Naive thymus-derived CD4-positive, alpha-beta T cell (primary cell): ENCODE measurements at regions of chr4 and their contacts with region 1.

Region 1: GRCh38 chr4:185471235-185472102 is at the start of gene CCDC110:
- DNase-seq: peak; percentile 72 to 89 (median 86)
- ATAC-seq: peak; percentile 99
- H3K4me3 ChIP-seq: peak within 1 kb of the TSS; percentile 61
- H3K4me3 Mint-ChIP-seq: peak within 1 kb of the TSS; percentile 87 to 98 (median 92)
- H3K27ac ChIP-seq: peak within 1 kb of the TSS; percentile 65
- H3K27ac Mint-ChIP-seq: peak within 1 kb of the TSS; percentile 5 to 90 (median 86)
- H3K4me1 ChIP-seq: peaks cover 0 to 3% of the 10 kb centered on the region in 2 donors
- H3K4me1 Mint-ChIP-seq: peaks cover 5 to 18% (median 9%) of the 10 kb centered on the region in 7 donors
- H3K27me3 ChIP-seq: no peaks in the 10 kb centered on the region
- H3K27me3 Mint-ChIP-seq: peaks cover 0 to 52% (median 6%) of the 10 kb centered on the region in 5 donors
- total RNA-seq, gene CCDC110: 0.42 to 1.8 (median 0.76) TPM in 4 of 5 experiments, not detected in the other

Region 2: DNA sequence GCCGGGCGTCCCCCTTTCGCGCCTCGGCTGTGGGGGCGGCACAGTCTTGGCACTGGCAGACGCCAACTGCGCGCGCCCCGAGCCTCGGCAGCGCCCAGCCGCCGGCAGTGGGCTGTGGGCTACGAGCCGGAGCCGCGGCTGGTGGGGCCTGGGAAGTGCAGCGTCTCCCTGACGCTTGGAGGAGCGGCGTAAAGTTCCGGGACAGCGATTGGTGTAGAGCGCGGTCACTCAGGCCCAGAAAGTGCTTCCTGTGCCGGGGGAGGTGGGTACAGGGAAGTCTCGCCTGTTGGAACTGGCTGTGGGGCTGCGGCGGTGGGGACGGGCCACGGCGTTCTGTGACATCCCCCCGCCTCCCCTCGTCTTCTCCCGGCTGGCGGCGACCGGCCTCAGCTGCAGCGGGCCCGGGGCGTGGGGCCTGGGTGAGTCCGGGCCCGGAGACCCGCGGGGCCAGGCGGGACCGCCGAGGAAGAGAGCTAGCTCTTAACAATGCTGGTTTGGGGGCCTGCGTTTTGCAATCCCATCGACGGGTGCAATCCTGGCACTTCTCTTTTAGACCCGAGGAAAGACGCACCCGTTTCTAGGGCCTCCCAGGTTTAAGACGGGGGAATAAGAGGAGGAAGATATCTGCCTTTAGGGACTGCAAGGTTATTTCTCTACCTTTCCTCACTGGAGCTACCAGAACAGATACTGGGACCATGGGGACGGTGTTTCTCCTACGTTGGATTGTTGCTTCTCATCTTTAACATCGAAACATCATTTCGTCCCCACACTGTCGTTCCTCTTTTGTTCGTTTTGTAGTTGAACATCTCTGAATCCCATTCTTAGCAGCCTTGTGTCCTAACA is 1812.2 kb before region 1 on chr4 and contains the starts of genes RWDD4 and TRAPPC11:
- CTCF ChIA-PET with region 1: no interaction called
- POLR2A ChIA-PET with region 1: no interaction called
- intact Hi-C with region 1: loop called in 1 of 2 experiments (anchors 2 kb)
- DNase-seq: peak; percentile 83 to 97 (median 95)
- ATAC-seq: peak; percentile 99
- H3K4me3 ChIP-seq: peak within 1 kb of the TSS; percentile 87
- H3K4me3 Mint-ChIP-seq: peak within 1 kb of the TSS; percentile 91 to 98 (median 96)
- H3K27ac ChIP-seq: peak within 1 kb of the TSS; percentile 96
- H3K27ac Mint-ChIP-seq: peak within 1 kb of the TSS; percentile 90 to 99 (median 95)
- H3K4me1 ChIP-seq: peaks cover 14 to 19% of the 10 kb centered on the region in 2 donors
- H3K4me1 Mint-ChIP-seq: peaks cover 35 to 48% (median 38%) of the 10 kb centered on the region in 7 donors
- H3K27me3 ChIP-seq: no peaks in the 10 kb centered on the region
- H3K27me3 Mint-ChIP-seq: no peaks in the 10 kb centered on the region
- total RNA-seq, gene RWDD4: 9.3 to 15.8 (median 11.6) TPM
- total RNA-seq, gene TRAPPC11: 26.3 to 48.8 (median 35.6) TPM

Region 3: GRCh38 chr4:185165605-185166063 is 305.8 kb before region 1 on chr4:
- CTCF ChIA-PET with region 1: no interaction called
- POLR2A ChIA-PET with region 1: no interaction called
- intact Hi-C with region 1: no loop called
- DNase-seq: peak in 7 of 9 donors; percentile 29 to 77 (median 71)
- ATAC-seq: peak; percentile 81
- H3K4me3 ChIP-seq: peak overlapping the region; percentile 0
- H3K4me3 Mint-ChIP-seq: peak overlapping the region; percentile 40 to 79 (median 66)
- H3K27ac ChIP-seq: no peak overlapping the region
- H3K27ac Mint-ChIP-seq: peak overlapping the region in 7 of 9 donors; percentile 21 to 82 (median 48)
- H3K4me1 ChIP-seq: peaks cover 14% of the 10 kb centered on the region in 2 donors
- H3K4me1 Mint-ChIP-seq: peaks cover 13 to 26% (median 20%) of the 10 kb centered on the region in 7 donors
- H3K27me3 ChIP-seq: no peaks in the 10 kb centered on the region
- H3K27me3 Mint-ChIP-seq: peaks cover 0 to 18% (median 0%) of the 10 kb centered on the region in 5 donors

Region 4: GRCh38 chr4:185209031-185209851 is 262.2 kb before region 1 on chr4 and contains the start of gene SNX25:
- CTCF ChIA-PET with region 1: no interaction called
- POLR2A ChIA-PET with region 1: no interaction called
- intact Hi-C with region 1: loop called (anchors 1 kb)
- DNase-seq: peak; percentile 77 to 93 (median 83)
- ATAC-seq: peak; percentile 96
- H3K4me3 ChIP-seq: peak within 1 kb of the TSS; percentile 81
- H3K4me3 Mint-ChIP-seq: peak within 1 kb of the TSS; percentile 87 to 95 (median 93)
- H3K27ac ChIP-seq: peak within 1 kb of the TSS; percentile 39
- H3K27ac Mint-ChIP-seq: peak within 1 kb of the TSS; percentile 82 to 93 (median 91)
- H3K4me1 ChIP-seq: peaks cover 27 to 28% of the 10 kb centered on the region in 2 donors
- H3K4me1 Mint-ChIP-seq: peaks cover 31 to 56% (median 47%) of the 10 kb centered on the region in 7 donors
- H3K27me3 ChIP-seq: no peaks in the 10 kb centered on the region
- H3K27me3 Mint-ChIP-seq: peaks cover 0 to 15% (median 0%) of the 10 kb centered on the region in 5 donors
- total RNA-seq, gene SNX25: 8.0 to 18.9 (median 14.3) TPM

Region 5: GRCh38 chr4:185587427-185588161 is 116.1 kb after region 1 on chr4:
- CTCF ChIA-PET with region 1: no interaction called
- POLR2A ChIA-PET with region 1: no interaction called
- intact Hi-C with region 1: loop called in 1 of 2 experiments (anchors 1 kb)
- DNase-seq: peak; percentile 22 to 91 (median 73)
- ATAC-seq: peak; percentile 92
- H3K4me3 ChIP-seq: peak overlapping the region; percentile 2
- H3K4me3 Mint-ChIP-seq: peak overlapping the region; percentile 67 to 86 (median 78)
- H3K27ac ChIP-seq: no peak overlapping the region
- H3K27ac Mint-ChIP-seq: peak overlapping the region in 8 of 9 donors; percentile 31 to 94 (median 84)
- H3K4me1 ChIP-seq: no peaks in the 10 kb centered on the region
- H3K4me1 Mint-ChIP-seq: peaks cover 8 to 20% (median 14%) of the 10 kb centered on the region in 7 donors
- H3K27me3 ChIP-seq: peaks cover 0 to under 1% of the 10 kb centered on the region in 2 donors
- H3K27me3 Mint-ChIP-seq: peaks cover 58 to 61% (median 60%) of the 10 kb centered on the region in 5 donors

Region 6: GRCh38 chr4:186191200-186192065 is 720.0 kb after region 1 on chr4 and contains the start of gene CYP4V2:
- CTCF ChIA-PET with region 1: no interaction called
- POLR2A ChIA-PET with region 1: no interaction called
- intact Hi-C with region 1: loop called (anchors 2 to 5 kb)
- DNase-seq: peak; percentile 68 to 94 (median 90)
- ATAC-seq: peak; percentile 90
- H3K4me3 ChIP-seq: peak within 1 kb of the TSS; percentile 91
- H3K4me3 Mint-ChIP-seq: peak within 1 kb of the TSS; percentile 89 to 97 (median 94)
- H3K27ac ChIP-seq: peak within 1 kb of the TSS; percentile 95
- H3K27ac Mint-ChIP-seq: peak within 1 kb of the TSS; percentile 94 to 99 (median 98)
- H3K4me1 ChIP-seq: peaks cover 12 to 19% of the 10 kb centered on the region in 2 donors
- H3K4me1 Mint-ChIP-seq: peaks cover 34 to 62% (median 56%) of the 10 kb centered on the region in 7 donors
- H3K27me3 ChIP-seq: no peaks in the 10 kb centered on the region
- H3K27me3 Mint-ChIP-seq: no peaks in the 10 kb centered on the region
- total RNA-seq, gene CYP4V2: 19.7 to 41.4 (median 26.0) TPM